Left lung (tissue), 14 donors: ENCODE measurements at regions of chr7 and their contacts with region 1.

Region 1: DNA sequence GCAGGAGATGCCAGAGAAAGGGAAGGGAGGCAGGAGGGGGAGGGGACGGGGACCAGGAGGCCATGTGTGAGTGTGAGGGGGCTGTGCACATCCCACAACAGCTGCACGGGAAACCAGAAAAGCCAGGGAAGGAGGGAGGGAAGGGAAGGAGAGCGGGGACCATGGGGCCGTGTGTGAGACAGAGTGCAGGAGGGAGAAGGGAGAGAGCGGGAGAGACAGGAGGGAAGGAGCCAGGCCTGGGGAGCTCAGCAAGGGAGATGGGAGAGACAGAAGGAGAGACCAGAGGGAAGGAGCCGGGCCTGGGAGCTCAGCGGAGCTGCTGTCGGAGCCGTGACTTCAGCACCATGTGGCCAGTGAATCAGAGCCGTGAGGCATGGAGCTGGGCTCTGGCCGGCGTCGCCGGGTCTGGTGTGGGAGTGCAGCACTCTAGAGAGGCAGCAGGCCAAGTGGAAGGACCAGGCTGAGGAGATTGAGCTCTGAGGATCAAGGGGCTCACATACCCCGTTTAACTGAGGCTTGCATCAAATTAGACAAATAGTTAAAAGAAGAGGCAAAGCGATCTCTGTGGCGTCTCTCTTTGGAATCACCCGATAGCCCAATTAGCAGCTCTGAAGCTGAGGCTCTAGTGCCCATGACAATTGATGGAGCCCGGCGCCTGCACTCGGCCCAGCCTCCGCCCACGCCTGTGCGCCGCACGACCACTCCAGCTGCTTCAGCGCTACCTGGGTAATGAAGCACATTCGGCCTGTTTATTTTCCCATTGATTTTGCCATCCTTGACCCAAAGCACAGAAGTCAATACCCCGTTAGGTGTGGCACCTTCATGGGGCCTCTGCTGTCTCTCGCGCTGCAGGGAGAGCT is 150.4 kb downstream of the MAD1L1 start:
- DNase-seq: no peak
- ATAC-seq: peak; percentile 47
- H3K4me3 ChIP-seq: no peak overlapping the region
- H3K27ac ChIP-seq: no peak overlapping the region
- H3K4me1 ChIP-seq: no peaks in the 10 kb centered on the region
- H3K27me3 ChIP-seq: no peaks in the 10 kb centered on the region
- CTCF ChIP-seq: no peak

Region 2: DNA sequence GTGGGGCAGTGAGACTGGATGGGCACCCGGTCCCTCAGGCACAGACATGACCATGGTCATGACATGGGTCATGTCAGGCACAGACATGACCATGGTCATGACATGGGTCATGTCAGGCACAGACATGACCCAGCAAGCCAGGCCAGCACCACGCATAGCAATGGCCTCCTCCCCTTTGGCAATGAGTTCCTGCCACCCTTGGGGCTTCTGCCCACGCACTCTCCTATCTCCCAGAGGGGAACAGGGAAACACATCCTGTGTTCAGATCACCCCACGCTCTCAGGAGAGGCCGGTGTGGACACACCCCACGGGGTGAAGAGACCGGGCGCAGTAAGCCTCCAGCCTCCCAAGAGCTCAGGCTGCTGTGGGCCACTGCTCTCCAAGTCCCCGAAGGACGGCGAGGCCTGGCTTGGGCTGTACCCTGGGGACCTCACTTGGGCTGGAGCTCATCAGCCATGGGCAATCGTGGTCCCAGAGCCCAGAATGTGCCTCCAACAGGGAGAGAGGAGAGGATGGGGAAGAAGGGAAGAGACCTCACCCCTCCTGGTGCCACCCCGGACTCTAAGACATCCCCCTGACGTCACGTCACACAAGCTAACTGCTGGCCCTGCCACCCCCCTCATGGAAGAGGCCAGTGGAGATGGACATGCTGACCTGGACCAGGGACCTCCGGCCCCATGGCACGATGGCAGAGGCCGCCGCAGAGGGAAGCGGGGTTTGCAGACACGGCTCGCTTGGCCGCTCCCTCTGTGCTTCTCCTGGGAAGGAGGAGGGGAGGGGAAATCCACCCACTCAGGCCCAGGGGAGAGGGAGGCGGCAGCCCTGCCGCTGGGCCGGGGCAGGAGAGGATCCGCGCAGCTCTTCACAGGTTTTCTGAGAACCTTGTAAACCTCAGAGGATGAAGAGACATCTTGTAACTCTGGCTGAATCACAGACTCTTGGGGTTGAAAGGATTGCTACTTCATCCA is 142.7 kb before region 1 on chr7:
- intact Hi-C with region 1: loop called in 1 of 2 experiments (anchors 10 kb)
- DNase-seq: peak in 2 of 4 donors; percentile 51 to 82
- ATAC-seq: peak; percentile 24
- H3K4me3 ChIP-seq: peak overlapping the region; percentile 0 to 48
- H3K27ac ChIP-seq: peak overlapping the region; percentile 42 to 85
- H3K4me1 ChIP-seq: peaks cover 0 to 46% of the 10 kb centered on the region in 2 donors
- H3K27me3 ChIP-seq: no peaks in the 10 kb centered on the region
- CTCF ChIP-seq: no peak

Region 3: GRCh38 chr7:2519119-2519930 is 437.0 kb after region 1 on chr7 and contains the start of gene LFNG:
- intact Hi-C with region 1: no loop called
- DNase-seq: peak; percentile 82 to 94 (median 91)
- ATAC-seq: peak; percentile 73
- H3K4me3 ChIP-seq: peak within 1 kb of the TSS; percentile 40 to 81
- H3K27ac ChIP-seq: peak within 1 kb of the TSS; percentile 14 to 82
- H3K4me1 ChIP-seq: peaks cover 32 to 55% of the 10 kb centered on the region in 2 donors
- H3K27me3 ChIP-seq: peaks cover 0 to 16% of the 10 kb centered on the region in 2 donors
- CTCF ChIP-seq: no peak
- polyA plus RNA-seq, gene LFNG: 5.2 to 12.5 (median 9.9) TPM